ENCODE measurements at regions of chr1 and their contacts with region 1.

Region 1: GRCh38 chr1:37946703-37947360 is at the start of gene INPP5B:
- DNase-seq: peak in 1 of 2 donors; percentile 94
- H3K4me3 ChIP-seq: peak within 1 kb of the TSS; percentile 65 to 75
- H3K27ac ChIP-seq: peak within 1 kb of the TSS; percentile 89
- H3K4me1 ChIP-seq: peaks cover 25% of the 10 kb centered on the region
- H3K27me3 ChIP-seq: no peaks in the 10 kb centered on the region
- CTCF ChIP-seq: no peak
- POLR2A ChIP-seq: no peak
- total RNA-seq, gene INPP5B: 31.2 TPM

Region 2: GRCh38 chr1:37989361-37989930 is 42.6 kb after region 1 on chr1:
- intact Hi-C with region 1: loop called (anchors 1 kb)
- DNase-seq: no peak
- H3K4me3 ChIP-seq: peak overlapping the region; percentile 82 to 90
- H3K27ac ChIP-seq: peak overlapping the region; percentile 74
- H3K4me1 ChIP-seq: peaks cover 21% of the 10 kb centered on the region
- H3K27me3 ChIP-seq: no peaks in the 10 kb centered on the region
- CTCF ChIP-seq: no peak
- POLR2A ChIP-seq: no peak

Measured in vagina (tissue), 2 donors.